GM12878 (cell line): ENCODE measurements at regions of chr1 and their contacts with region 1.

Region 1: GRCh38 chr1:24201941-24202440 is 14.9 kb upstream of the IFNLR1 start:
- DNase-seq: no peak
- ATAC-seq: peak; percentile 41
- H3K4me3 ChIP-seq: no peak overlapping the region
- H3K27ac ChIP-seq: no peak overlapping the region
- H3K4me1 ChIP-seq: peaks cover 28% of the 10 kb centered on the region
- H3K27me3 ChIP-seq: no peaks in the 10 kb centered on the region; a peak in 1 of 4 replicates
- CTCF ChIP-seq: peak; percentile 78 to 85 (median 82); a peak in 5 of 6 replicates
- EP300 ChIP-seq: no peak
- POLR2A ChIP-seq: no peak
- RAD21 ChIP-seq: peak; percentile 94

Region 2: GRCh38 chr1:24179251-24179840 is 22.6 kb before region 1 on chr1:
- CTCF ChIA-PET with region 1: interaction called, 11 read pairs
- POLR2A ChIA-PET with region 1: interaction called, 3 read pairs
- RAD21 ChIA-PET with region 1: interaction called, 15 read pairs
- SMC1A ChIA-PET with region 1: interaction called, 7 read pairs
- in situ Hi-C with region 1: no loop called
- intact Hi-C with region 1: no loop called
- DNase-seq: no peak
- ATAC-seq: no peak
- H3K4me3 ChIP-seq: no peak overlapping the region
- H3K27ac ChIP-seq: no peak overlapping the region
- H3K4me1 ChIP-seq: peaks cover 6% of the 10 kb centered on the region
- H3K27me3 ChIP-seq: peaks cover 0 to 4% of the 10 kb centered on the region in 2 experiments; a peak in 2 of 4 replicates
- CTCF ChIP-seq: no peak
- EP300 ChIP-seq: no peak
- POLR2A ChIP-seq: no peak
- RAD21 ChIP-seq: no peak

Region 3: DNA sequence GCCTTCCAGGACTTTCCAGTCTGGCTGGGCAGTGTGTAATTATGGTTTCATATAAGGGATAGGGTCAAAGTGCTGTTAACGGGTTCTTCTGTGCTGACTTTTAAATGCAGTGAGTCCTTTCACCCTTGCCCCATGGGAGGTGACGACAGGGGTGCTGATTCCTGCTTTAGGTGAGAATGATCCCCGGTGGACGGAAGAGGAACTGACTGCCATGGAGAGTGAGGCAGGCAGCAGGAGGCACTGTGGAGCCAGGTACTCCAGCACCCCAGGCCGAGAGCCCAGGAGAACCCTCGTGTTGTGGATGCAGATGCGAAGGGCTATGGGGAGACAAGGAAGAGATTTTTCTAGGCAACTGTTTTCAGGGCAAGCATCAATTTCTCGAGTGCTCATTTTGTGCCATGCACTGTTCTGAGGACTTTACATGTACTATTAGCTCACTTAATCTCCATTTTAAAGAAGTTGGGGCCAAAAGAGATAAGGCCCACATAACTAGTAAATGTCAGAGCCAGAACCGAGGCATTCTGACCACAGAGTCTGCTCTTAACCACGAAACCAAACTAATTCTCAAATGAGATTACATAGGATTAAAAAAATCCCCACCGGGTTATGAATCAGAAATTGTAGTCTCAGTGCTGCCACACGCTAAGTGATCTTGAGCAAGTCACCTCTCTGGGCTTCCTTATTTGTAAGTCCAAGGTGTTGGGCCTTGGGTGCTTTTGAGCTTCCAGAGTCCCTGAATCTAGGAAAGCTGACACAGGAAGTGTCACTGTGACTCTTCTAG is 183.4 kb after region 1 on chr1:
- CTCF ChIA-PET with region 1: interaction called, 451 read pairs
- POLR2A ChIA-PET with region 1: no interaction called
- RAD21 ChIA-PET with region 1: interaction called, 225 read pairs
- SMC1A ChIA-PET with region 1: interaction called, 297 read pairs
- in situ Hi-C with region 1: loop called (anchors 5 kb)
- intact Hi-C with region 1: no loop called
- DNase-seq: no peak
- ATAC-seq: peak; percentile 59
- H3K4me3 ChIP-seq: no peak overlapping the region
- H3K27ac ChIP-seq: 0 out of 2 replicates have a peak overlapping the region, but pooled peaks have one; percentile 20
- H3K4me1 ChIP-seq: peaks cover 31% of the 10 kb centered on the region
- H3K27me3 ChIP-seq: no peaks in the 10 kb centered on the region; a peak in 1 of 4 replicates
- CTCF ChIP-seq: peak in 2 of 3 experiments; percentile 48 to 57; a peak in 5 of 6 replicates
- EP300 ChIP-seq: no peak
- POLR2A ChIP-seq: no peak
- RAD21 ChIP-seq: peak; percentile 41

Region 4: DNA sequence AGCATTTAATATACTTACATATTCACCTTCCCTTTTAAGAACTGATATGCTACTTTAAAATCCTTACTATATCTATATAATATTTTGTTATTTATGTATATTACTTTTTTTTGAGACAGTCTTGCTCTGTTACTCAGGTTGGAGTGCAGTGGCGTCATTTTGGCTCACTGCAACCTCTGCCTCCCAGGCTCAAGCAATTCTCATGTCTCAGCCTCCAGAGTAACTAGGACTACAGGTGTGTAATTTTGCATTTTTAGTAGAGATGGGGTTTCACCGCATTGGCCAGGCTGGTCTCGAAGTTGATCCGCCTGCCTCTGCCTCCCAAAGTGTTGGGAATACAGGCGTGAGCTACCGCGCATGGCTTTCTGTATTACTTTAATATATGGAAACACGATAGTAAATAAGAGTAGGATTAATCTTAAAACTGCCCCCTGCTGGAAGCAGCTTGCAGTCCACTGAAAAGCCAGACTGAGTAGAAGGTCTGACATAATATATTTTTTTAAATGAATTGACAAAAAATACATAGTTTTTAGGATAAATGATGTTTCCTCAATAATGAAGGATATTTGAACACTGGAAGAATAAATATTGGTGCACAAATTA is 325.1 kb after region 1 on chr1:
- CTCF ChIA-PET with region 1: interaction called, 57 read pairs
- POLR2A ChIA-PET with region 1: no interaction called
- RAD21 ChIA-PET with region 1: interaction called, 9 read pairs
- SMC1A ChIA-PET with region 1: interaction called, 4 read pairs
- in situ Hi-C with region 1: no loop called
- intact Hi-C with region 1: loop called (anchors 5 kb)
- DNase-seq: no peak
- ATAC-seq: 0 out of 3 replicates have a peak, but pooled peaks have one; percentile 29
- H3K4me3 ChIP-seq: no peak overlapping the region
- H3K27ac ChIP-seq: no peak overlapping the region
- H3K4me1 ChIP-seq: no peaks in the 10 kb centered on the region
- H3K27me3 ChIP-seq: no peaks in the 10 kb centered on the region; a peak in 2 of 4 replicates
- CTCF ChIP-seq: peak; percentile 30 to 52 (median 47); a peak in 4 of 6 replicates
- EP300 ChIP-seq: no peak
- POLR2A ChIP-seq: no peak
- RAD21 ChIP-seq: peak; percentile 33; the same call in 1 of the 2 replicates

Region 5: DNA sequence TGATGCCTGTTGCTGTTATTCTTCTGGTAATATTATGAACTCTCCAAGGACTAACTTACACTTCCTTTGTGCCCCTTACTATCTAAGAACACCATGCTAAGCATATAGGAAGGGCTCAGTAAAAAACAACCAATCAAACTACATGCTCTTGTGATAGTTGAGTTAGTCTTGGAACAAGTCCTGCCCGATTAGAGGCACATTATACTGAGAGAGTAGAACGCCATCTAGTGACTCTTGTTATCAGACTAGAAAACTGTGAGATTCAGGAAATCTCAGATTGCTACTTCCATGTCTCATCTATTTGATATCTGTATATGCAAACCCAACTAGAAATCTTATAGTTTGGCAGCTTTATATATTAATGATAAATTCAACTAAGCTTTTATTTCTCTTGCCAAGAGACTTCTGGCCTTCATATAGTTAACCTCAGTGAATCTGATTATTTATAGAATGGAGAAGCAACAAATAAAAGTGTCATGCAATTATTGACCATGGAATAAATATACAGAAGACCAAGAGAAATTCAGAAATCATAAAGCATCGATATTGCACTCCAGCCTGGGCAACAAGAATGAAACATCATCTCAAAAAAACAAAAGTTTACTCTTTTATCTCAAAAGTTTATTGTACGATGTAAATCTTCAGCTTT is 433.3 kb after region 1 on chr1:
- CTCF ChIA-PET with region 1: interaction called, 49 read pairs
- POLR2A ChIA-PET with region 1: no interaction called
- RAD21 ChIA-PET with region 1: interaction called, 18 read pairs
- SMC1A ChIA-PET with region 1: interaction called, 6 read pairs
- in situ Hi-C with region 1: loop called (anchors 5 kb)
- intact Hi-C with region 1: loop called (anchors 1 kb)
- DNase-seq: no peak
- ATAC-seq: peak; percentile 86
- H3K4me3 ChIP-seq: no peak overlapping the region
- H3K27ac ChIP-seq: no peak overlapping the region
- H3K4me1 ChIP-seq: no peaks in the 10 kb centered on the region
- H3K27me3 ChIP-seq: no peaks in the 10 kb centered on the region
- CTCF ChIP-seq: peak; percentile 44 to 70 (median 57); a peak in 4 of 6 replicates
- EP300 ChIP-seq: no peak
- POLR2A ChIP-seq: no peak
- RAD21 ChIP-seq: peak; percentile 68